ENCODE measurements at regions of chr3 and their contacts with region 1.

Region 1: DNA sequence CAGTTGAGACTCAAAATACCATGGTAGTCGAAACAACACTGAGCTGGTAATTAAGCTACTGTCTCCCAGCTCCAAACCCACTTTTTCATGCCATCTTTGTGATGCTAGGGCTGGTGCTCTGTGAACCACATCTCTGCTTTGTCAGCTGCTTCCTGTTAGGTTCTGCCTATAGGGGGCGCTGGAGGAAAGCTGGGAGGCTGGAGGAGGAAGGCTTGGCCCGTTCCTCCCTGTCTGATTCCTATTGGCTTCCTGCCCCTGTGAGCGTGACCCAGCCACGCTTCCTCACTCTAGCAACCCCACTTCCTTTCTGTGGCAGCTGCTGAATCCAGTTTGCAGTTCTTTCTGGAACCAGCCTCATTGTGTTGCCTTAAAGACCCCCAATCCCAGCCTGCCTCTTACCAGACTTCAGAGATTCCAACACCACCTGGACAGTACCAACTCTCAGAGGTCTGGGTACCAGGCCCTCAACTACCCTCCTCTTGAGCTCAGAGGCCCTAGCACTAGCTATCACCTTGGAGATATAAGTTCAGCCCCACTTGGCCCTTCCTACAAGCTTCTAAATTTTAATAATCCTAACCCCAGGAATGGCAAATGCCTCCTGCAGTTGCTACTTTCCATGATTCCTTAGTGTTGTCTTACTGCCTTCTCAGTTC is 120.9 kb downstream of the ERC2 start:
- DNase-seq: peak; percentile 44 to 96
- H3K4me3 ChIP-seq: no peak overlapping the region
- H3K27ac ChIP-seq: no peak overlapping the region
- H3K4me1 ChIP-seq: peaks cover 0 to 3% (median 1%) of the 10 kb centered on the region in 4 experiments; a peak in 3 of 7 replicates
- H3K27me3 ChIP-seq: no peaks in the 10 kb centered on the region
- CTCF ChIP-seq: peak; percentile 90 to 97 (median 97)
- EP300 ChIP-seq: no peak
- POLR2A ChIP-seq: no peak
- RAD21 ChIP-seq: peak; percentile 88 to 91

Region 2: GRCh38 chr3:55974421-55975165 is 372.8 kb before region 1 on chr3:
- CTCF ChIA-PET with region 1: no interaction called
- POLR2A ChIA-PET with region 1: no interaction called
- DNase-seq: no peak
- H3K4me3 ChIP-seq: no peak overlapping the region
- H3K27ac ChIP-seq: no peak overlapping the region
- H3K4me1 ChIP-seq: 0 out of 7 replicates have a peak, but pooled peaks cover 0 to 3% (median 0%) of the 10 kb centered on the region in 4 experiments
- H3K27me3 ChIP-seq: peaks cover 0 to 1% (median 0%) of the 10 kb centered on the region in 4 experiments; a peak in 1 of 7 replicates
- CTCF ChIP-seq: no peak
- EP300 ChIP-seq: no peak
- POLR2A ChIP-seq: no peak
- RAD21 ChIP-seq: no peak

Region 3: GRCh38 chr3:56296361-56296760 is 51.0 kb before region 1 on chr3:
- CTCF ChIA-PET with region 1: no interaction called
- POLR2A ChIA-PET with region 1: no interaction called
- DNase-seq: no peak
- H3K4me3 ChIP-seq: no peak overlapping the region
- H3K27ac ChIP-seq: no peak overlapping the region
- H3K4me1 ChIP-seq: peaks cover 0 to 3% (median 0%) of the 10 kb centered on the region in 4 experiments; a peak in 1 of 7 replicates
- H3K27me3 ChIP-seq: no peaks in the 10 kb centered on the region
- CTCF ChIP-seq: no peak
- EP300 ChIP-seq: no peak
- POLR2A ChIP-seq: no peak
- RAD21 ChIP-seq: no peak

Region 4: DNA sequence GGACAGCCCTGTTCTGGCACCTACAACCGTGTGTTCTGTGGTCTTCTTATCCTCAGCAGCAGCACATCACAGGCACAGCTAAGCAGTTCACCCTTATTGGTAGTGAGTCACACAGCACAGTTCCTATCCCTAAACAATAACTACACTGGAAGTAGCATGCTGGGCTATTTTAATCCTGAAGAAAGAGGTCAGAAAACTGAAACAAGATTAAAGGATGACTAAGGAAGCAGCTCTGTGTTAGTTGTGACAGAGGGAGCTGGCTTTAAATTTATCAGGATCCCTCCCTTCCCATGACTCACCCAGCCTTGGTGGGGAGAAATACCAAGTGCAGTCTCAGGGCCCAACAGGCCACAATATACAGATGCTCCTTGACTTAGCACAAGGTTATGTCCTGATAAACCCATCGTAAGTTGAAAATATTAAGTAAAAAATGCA is 23.3 kb before region 1 on chr3:
- CTCF ChIA-PET with region 1: interaction called, 11 read pairs
- POLR2A ChIA-PET with region 1: no interaction called
- DNase-seq: no peak
- H3K4me3 ChIP-seq: no peak overlapping the region
- H3K27ac ChIP-seq: no peak overlapping the region
- H3K4me1 ChIP-seq: peaks cover 2 to 9% (median 6%) of the 10 kb centered on the region in 4 experiments; a peak in 5 of 7 replicates
- H3K27me3 ChIP-seq: no peaks in the 10 kb centered on the region
- CTCF ChIP-seq: no peak
- EP300 ChIP-seq: no peak
- POLR2A ChIP-seq: no peak
- RAD21 ChIP-seq: no peak

Region 5: DNA sequence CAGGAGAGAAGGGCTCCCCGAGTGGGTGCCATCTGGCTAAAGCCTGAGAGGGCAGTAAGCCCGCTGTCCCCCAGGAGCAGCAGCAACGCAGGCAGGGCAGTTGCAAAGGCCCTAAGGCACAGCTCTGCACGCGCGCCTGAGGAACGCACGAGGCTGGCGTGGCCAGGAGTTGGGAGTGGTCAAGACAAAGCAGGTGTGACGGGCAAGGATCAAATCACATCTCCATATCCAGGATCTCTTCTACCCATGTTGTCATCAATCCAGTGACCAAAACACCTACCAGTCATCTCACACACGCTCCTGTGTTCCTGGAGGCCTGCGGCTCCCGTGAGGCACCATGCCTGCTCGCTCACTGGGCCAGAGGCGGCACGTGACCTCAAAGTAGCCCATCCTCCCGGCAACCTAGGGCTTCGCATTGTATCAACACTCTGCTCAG is 61.4 kb after region 1 on chr3:
- CTCF ChIA-PET with region 1: interaction called, 21 read pairs
- POLR2A ChIA-PET with region 1: no interaction called
- DNase-seq: no peak
- H3K4me3 ChIP-seq: no peak overlapping the region
- H3K27ac ChIP-seq: no peak overlapping the region
- H3K4me1 ChIP-seq: no peaks in the 10 kb centered on the region
- H3K27me3 ChIP-seq: no peaks in the 10 kb centered on the region
- CTCF ChIP-seq: no peak
- EP300 ChIP-seq: no peak
- POLR2A ChIP-seq: no peak
- RAD21 ChIP-seq: no peak

Region 6: DNA sequence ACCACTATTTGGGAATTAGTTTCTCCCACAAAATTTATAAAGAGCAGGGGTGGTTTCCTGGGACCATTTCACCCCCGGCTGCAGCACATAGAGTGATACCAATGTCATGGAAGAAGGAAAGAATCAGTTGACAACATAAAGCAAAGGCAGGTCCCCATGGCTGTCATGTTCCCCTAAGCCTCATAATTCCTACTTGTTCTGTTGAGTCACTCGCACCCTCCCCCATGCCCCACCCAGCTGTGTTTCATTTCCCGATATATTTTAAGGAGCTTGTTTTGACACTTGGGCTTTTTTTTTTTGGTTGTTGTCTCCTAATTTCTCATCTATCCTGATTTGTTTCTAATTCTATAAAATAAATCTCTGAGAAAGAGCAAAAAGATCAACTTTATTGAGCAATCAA is 96.0 kb after region 1 on chr3:
- CTCF ChIA-PET with region 1: interaction called, 133 read pairs
- POLR2A ChIA-PET with region 1: no interaction called
- DNase-seq: no peak
- H3K4me3 ChIP-seq: no peak overlapping the region
- H3K27ac ChIP-seq: no peak overlapping the region
- H3K4me1 ChIP-seq: no peaks in the 10 kb centered on the region
- H3K27me3 ChIP-seq: no peaks in the 10 kb centered on the region
- CTCF ChIP-seq: no peak
- EP300 ChIP-seq: no peak
- POLR2A ChIP-seq: no peak
- RAD21 ChIP-seq: no peak

Region 7: GRCh38 chr3:56467108-56467507 is 119.8 kb after region 1 on chr3:
- CTCF ChIA-PET with region 1: interaction called, 14 read pairs
- POLR2A ChIA-PET with region 1: no interaction called
- DNase-seq: peak; percentile 80 to 83
- H3K4me3 ChIP-seq: peak overlapping the region; percentile 73 to 97 (median 77)
- H3K27ac ChIP-seq: no peak overlapping the region
- H3K4me1 ChIP-seq: peaks cover 0 to 4% (median 2%) of the 10 kb centered on the region in 4 experiments; a peak in 3 of 7 replicates
- H3K27me3 ChIP-seq: no peaks in the 10 kb centered on the region
- CTCF ChIP-seq: no peak
- EP300 ChIP-seq: no peak
- POLR2A ChIP-seq: no peak
- RAD21 ChIP-seq: no peak

Region 8: DNA sequence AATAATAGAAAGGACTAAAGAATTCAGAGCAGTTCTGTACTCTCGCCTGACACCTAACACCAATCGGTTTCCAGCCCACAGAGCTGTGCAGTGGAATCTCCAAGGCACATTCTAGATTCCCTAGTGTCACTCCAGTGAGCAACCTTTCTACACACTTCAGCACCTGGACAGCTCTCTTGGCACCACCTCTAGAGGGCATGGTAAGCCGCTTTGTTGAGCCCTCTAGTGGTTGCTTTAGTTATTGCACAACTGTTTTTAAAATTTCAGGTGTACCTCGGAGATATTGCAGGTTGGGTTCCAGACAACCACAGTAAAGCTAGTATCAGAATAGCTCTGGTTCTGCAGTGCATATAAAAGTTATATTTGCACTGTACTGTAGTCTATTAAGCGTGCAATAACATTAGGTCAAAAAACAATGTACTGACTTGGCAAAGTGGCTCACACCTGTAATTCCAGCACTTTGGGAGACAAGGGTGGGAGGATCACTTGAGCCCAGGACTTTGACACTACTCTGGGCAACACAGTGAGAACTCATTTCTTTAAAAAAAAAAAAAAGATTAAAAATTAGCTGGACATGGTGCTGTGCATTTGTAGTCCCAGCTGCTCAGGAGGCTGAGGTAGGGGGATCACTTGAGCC is 147.5 kb after region 1 on chr3:
- CTCF ChIA-PET with region 1: interaction called, 22 read pairs
- POLR2A ChIA-PET with region 1: no interaction called
- DNase-seq: peak; percentile 21 to 69
- H3K4me3 ChIP-seq: no peak overlapping the region
- H3K27ac ChIP-seq: no peak overlapping the region
- H3K4me1 ChIP-seq: no peaks in the 10 kb centered on the region
- H3K27me3 ChIP-seq: no peaks in the 10 kb centered on the region
- CTCF ChIP-seq: peak; percentile 57 to 99 (median 99)
- EP300 ChIP-seq: no peak
- POLR2A ChIP-seq: no peak
- RAD21 ChIP-seq: peak; percentile 75 to 87